ENCODE measurements at regions of chr4 and their contacts with region 1.

Region 1: GRCh38 chr4:98658287-98659105 is at the start of gene TSPAN5:
- DNase-seq: peak; percentile 89 to 93
- ATAC-seq: peak; percentile 94
- H3K4me3 ChIP-seq: peak within 1 kb of the TSS; percentile 46 to 67
- H3K27ac ChIP-seq: peak within 1 kb of the TSS; percentile 0 to 69
- H3K4me1 ChIP-seq: no peaks in the 10 kb centered on the region
- H3K27me3 ChIP-seq: no peaks in the 10 kb centered on the region
- total RNA-seq, gene TSPAN5: 8.6 to 8.7 TPM

Region 2: GRCh38 chr4:98467627-98468072 is 190.8 kb before region 1 on chr4:
- intact Hi-C with region 1: loop called in 1 of 2 experiments (anchors 5 kb)
- DNase-seq: peak in 1 of 2 donors; percentile 81
- ATAC-seq: peak; percentile 90
- H3K4me3 ChIP-seq: no peak overlapping the region
- H3K27ac ChIP-seq: no peak overlapping the region
- H3K4me1 ChIP-seq: no peaks in the 10 kb centered on the region
- H3K27me3 ChIP-seq: peaks cover 0 to 2% of the 10 kb centered on the region in 2 donors

Region 3: GRCh38 chr4:98626350-98626749 is 32.1 kb before region 1 on chr4:
- intact Hi-C with region 1: loop called in 1 of 2 experiments (anchors 2 kb)
- DNase-seq: peak; percentile 75 to 77
- ATAC-seq: peak; percentile 76
- H3K4me3 ChIP-seq: no peak overlapping the region
- H3K27ac ChIP-seq: peak overlapping the region in 1 of 2 donors; percentile 50
- H3K4me1 ChIP-seq: peaks cover 0 to 6% of the 10 kb centered on the region in 2 donors
- H3K27me3 ChIP-seq: no peaks in the 10 kb centered on the region

Region 4: DNA sequence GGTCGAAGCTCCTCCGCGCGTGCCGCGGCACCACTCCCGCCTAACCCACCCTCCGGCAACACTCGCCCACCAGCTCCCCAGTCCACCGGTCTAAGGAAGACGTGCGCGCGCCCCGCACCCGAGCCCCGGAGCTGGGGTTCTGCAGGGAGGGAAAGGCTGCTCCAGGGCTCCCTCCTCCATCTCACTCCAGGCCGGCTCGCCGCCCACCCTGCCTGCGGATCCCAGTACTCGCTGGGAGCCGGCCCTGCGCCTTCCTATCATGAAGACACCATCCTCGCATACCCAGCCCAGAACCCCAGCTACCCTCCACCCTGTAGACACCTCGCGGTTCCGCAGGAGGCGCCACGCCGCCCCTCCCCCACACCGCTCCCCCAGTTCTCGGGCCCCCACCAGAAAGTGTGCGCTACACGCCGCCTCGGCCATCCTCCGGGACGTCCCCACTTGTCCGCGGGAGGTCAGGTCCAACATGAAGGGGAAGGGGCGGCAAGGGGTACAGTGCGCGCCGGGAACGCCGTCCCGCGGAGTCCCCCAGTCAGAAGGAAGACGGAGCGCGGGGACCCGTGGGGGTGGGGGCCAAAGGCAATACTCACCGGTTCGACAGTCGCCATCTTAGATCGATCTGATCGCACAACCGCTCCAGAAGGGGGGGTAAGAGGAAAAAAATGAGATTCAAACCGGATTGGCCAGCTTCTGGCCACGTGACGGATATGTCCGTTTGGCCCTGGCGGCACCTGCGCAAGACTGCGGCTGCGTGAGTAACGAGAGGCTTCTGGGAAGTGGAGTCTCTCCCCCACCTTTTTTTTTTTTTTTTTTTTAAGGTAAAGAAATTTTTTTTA is 270.2 kb after region 1 on chr4 and contains the start of gene EIF4E:
- intact Hi-C with region 1: loop called (anchors 5 to 10 kb)
- DNase-seq: peak; percentile 98 to 99
- ATAC-seq: peak; percentile 98
- H3K4me3 ChIP-seq: peak within 1 kb of the TSS; percentile 72 to 84
- H3K27ac ChIP-seq: peak within 1 kb of the TSS; percentile 34 to 97
- H3K4me1 ChIP-seq: no peaks in the 10 kb centered on the region
- H3K27me3 ChIP-seq: no peaks in the 10 kb centered on the region
- total RNA-seq, gene EIF4E: 60.3 to 72.8 TPM